Caco-2 (cell line): ENCODE measurements at regions of chr3 and their contacts with region 1.

Region 1: DNA sequence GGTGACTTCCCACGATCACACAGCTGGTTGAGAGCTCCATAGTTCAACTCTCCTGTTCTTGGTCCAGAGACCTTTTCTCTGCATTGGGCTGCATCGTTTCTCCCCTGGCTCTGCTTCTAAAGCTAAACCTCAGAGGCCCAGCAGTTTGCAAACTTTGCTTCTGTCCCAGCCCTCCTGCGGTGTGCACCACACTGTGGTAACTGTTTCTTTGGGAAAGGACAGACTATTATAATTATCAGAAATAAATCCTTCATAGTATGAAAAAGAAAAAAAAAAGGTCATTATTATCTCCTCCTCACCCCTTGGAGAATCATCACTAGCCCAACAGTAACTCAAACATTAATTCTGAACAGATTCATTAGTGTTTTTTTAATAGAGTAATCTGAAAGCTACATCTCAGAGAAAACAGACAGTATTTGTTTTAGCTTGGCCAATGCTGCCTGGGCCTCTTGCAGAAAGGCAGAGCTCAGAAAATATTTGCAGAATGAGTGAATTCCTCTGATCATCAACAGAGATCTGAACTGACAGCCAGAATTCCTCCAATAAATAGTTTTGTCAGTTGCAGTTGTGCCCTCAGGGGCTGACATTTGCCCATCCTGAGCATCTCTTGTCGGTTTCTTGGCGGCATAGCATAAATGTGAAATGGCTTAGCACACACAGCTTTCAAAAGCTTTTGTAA is 52.9 kb downstream of the BFSP2 start:
- DNase-seq: peak; percentile 80 to 82
- H3K4me3 ChIP-seq: no peak overlapping the region
- H3K4me3 Mint-ChIP-seq: peak overlapping the region; percentile 59
- H3K27ac Mint-ChIP-seq: peak overlapping the region; percentile 72
- H3K4me1 ChIP-seq: peaks cover 60% of the 10 kb centered on the region
- H3K4me1 Mint-ChIP-seq: peaks cover 48% of the 10 kb centered on the region
- H3K27me3 ChIP-seq: no peaks in the 10 kb centered on the region
- H3K27me3 Mint-ChIP-seq: no peaks in the 10 kb centered on the region
- CTCF ChIP-seq: no peak

Region 2: GRCh38 chr3:133464573-133464972 is 11.8 kb after region 1 on chr3:
- CTCF ChIA-PET with region 1: interaction called, 4 read pairs
- POLR2A ChIA-PET with region 1: no interaction called
- intact Hi-C with region 1: loop called (anchors 1 kb)
- DNase-seq: no peak
- H3K4me3 ChIP-seq: no peak overlapping the region
- H3K4me3 Mint-ChIP-seq: no peak overlapping the region
- H3K27ac Mint-ChIP-seq: no peak overlapping the region
- H3K4me1 ChIP-seq: peaks cover 46% of the 10 kb centered on the region
- H3K4me1 Mint-ChIP-seq: peaks cover 35% of the 10 kb centered on the region
- H3K27me3 ChIP-seq: no peaks in the 10 kb centered on the region
- H3K27me3 Mint-ChIP-seq: no peaks in the 10 kb centered on the region
- CTCF ChIP-seq: peak in 1 of 2 experiments; percentile 25

Region 3: GRCh38 chr3:133591271-133591742 is 138.5 kb after region 1 on chr3:
- CTCF ChIA-PET with region 1: no interaction called
- POLR2A ChIA-PET with region 1: no interaction called
- intact Hi-C with region 1: no loop called
- DNase-seq: peak in 1 of 2 experiments; percentile 23
- H3K4me3 ChIP-seq: no peak overlapping the region
- H3K4me3 Mint-ChIP-seq: no peak overlapping the region
- H3K27ac Mint-ChIP-seq: peak overlapping the region; percentile 59
- H3K4me1 ChIP-seq: peaks cover 8% of the 10 kb centered on the region; the same call in 1 of the 2 replicates
- H3K4me1 Mint-ChIP-seq: peaks cover 28% of the 10 kb centered on the region
- H3K27me3 ChIP-seq: no peaks in the 10 kb centered on the region
- H3K27me3 Mint-ChIP-seq: no peaks in the 10 kb centered on the region
- CTCF ChIP-seq: no peak